GM12878 (cell line): ENCODE measurements at regions of chr10 and their contacts with region 1.

Region 1: DNA sequence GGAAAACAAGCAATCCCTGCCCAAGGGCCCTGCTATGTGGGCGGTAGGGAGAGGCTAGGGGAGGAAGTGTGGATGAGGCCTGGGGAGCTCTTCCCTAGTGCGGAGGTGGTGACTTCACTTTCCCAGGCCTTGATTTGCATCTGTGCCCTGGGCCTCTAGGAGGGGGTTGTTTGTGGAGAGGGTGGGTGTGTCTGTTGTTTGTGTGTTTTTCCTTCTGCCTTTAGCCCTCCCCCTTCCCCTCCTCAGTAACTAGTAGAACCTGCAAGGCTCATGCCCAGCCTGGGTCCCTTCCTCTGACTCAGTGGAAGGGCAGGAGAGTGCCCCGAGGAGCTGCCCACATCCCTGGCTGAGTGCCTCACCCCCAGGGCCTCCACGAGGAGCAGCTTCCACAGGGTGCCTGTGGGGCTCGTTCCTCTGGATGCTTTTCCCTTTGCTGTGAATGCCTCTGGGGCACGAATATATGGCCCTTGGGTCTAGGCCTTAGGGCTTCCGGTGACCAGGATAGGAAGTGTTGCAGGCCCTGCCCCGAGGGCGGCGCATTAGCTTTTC is 89.4 kb upstream of the DUSP5 start:
- DNase-seq: no peak
- ATAC-seq: no peak
- H3K4me3 ChIP-seq: no peak overlapping the region
- H3K27ac ChIP-seq: no peak overlapping the region
- H3K4me1 ChIP-seq: peaks cover 48% of the 10 kb centered on the region
- H3K27me3 ChIP-seq: no peaks in the 10 kb centered on the region
- CTCF ChIP-seq: no peak
- EP300 ChIP-seq: no peak
- POLR2A ChIP-seq: no peak
- RAD21 ChIP-seq: no peak

Region 2: DNA sequence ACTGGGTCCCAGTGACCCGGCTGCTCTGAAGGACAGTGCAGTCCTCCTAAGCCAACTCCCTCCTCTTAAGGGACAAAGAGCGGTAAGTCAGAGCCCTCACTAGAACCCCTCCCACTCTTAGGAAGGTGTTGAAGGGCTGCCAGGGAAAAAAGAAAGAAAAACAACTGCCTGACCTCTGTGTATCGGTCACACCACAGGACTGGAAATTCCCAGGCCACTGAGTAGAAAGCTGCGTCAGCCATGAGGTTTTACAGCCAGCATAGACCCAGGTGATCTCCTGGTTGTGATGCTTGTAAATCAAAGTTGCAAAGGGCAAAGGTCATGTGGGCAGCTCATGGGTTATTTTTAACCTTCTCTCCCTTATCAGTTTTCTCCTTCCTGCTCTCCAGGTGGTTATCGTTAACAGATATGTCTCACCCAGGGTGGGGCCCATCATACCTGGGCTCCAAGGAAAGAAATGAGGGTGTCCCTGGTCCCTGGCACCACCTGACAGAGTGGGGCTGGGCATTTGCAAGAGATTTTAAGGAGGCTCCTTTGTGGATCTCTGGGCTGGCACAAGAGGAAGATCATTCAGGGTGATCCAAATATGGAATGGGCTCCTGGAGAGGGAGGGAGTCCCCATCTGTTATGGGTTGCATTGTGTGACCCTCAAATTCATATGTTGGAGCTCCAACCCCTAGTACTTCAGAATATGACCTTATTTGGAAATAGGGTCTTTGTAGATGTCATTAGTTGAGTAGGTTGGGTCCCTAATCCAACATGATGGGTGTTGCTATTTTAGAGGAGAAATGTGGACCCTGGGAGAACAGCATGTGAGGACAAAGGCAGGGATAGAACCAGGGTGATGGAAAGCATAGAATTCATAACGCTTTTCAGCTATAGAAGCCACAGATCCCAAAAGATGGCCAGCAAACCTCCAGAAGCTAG is 12.3 kb before region 1 on chr10:
- CTCF ChIA-PET with region 1: interaction called, 36 read pairs
- POLR2A ChIA-PET with region 1: interaction called, 117 read pairs
- RAD21 ChIA-PET with region 1: interaction called, 58 read pairs
- SMC1A ChIA-PET with region 1: interaction called, 81 read pairs
- in situ Hi-C with region 1: no loop called
- intact Hi-C with region 1: no loop called
- DNase-seq: peak; percentile 91
- ATAC-seq: peak; percentile 92
- H3K4me3 ChIP-seq: no peak overlapping the region
- H3K27ac ChIP-seq: peak overlapping the region; percentile 69
- H3K4me1 ChIP-seq: peaks cover 16% of the 10 kb centered on the region
- H3K27me3 ChIP-seq: no peaks in the 10 kb centered on the region
- CTCF ChIP-seq: no peak
- EP300 ChIP-seq: peak; percentile 99 to 100
- POLR2A ChIP-seq: no peak
- RAD21 ChIP-seq: peak; percentile 24; the same call in 1 of the 2 replicates